ENCODE measurements at regions of chr6 and their contacts with region 1.

Region 1: GRCh38 chr6:12313992-12314805 is 24.0 kb downstream of the EDN1 start:
- DNase-seq: no peak
- ATAC-seq: no peak
- H3K4me3 ChIP-seq: no peak overlapping the region
- H3K27ac ChIP-seq: no peak overlapping the region
- H3K4me1 ChIP-seq: no peaks in the 10 kb centered on the region
- H3K27me3 ChIP-seq: peaks cover 0 to 3% (median 0%) of the 10 kb centered on the region in 7 donors
- CTCF ChIP-seq: no peak

Region 2: GRCh38 chr6:12585497-12586041 is 271.4 kb after region 1 on chr6:
- intact Hi-C with region 1: loop called in 1 of 10 experiments (anchors 5 kb)
- DNase-seq: peak; percentile 15 to 66
- ATAC-seq: peak; percentile 71 to 95 (median 83)
- H3K4me3 ChIP-seq: peak overlapping the region in 6 of 10 donors; percentile 6 to 37 (median 24)
- H3K27ac ChIP-seq: peak overlapping the region; percentile 32 to 82 (median 69)
- H3K4me1 ChIP-seq: peaks cover 0 to 24% (median 8%) of the 10 kb centered on the region in 9 donors
- H3K27me3 ChIP-seq: no peaks in the 10 kb centered on the region
- CTCF ChIP-seq: no peak